ENCODE measurements at regions of chr11 and their contacts with region 1.

Region 1: DNA sequence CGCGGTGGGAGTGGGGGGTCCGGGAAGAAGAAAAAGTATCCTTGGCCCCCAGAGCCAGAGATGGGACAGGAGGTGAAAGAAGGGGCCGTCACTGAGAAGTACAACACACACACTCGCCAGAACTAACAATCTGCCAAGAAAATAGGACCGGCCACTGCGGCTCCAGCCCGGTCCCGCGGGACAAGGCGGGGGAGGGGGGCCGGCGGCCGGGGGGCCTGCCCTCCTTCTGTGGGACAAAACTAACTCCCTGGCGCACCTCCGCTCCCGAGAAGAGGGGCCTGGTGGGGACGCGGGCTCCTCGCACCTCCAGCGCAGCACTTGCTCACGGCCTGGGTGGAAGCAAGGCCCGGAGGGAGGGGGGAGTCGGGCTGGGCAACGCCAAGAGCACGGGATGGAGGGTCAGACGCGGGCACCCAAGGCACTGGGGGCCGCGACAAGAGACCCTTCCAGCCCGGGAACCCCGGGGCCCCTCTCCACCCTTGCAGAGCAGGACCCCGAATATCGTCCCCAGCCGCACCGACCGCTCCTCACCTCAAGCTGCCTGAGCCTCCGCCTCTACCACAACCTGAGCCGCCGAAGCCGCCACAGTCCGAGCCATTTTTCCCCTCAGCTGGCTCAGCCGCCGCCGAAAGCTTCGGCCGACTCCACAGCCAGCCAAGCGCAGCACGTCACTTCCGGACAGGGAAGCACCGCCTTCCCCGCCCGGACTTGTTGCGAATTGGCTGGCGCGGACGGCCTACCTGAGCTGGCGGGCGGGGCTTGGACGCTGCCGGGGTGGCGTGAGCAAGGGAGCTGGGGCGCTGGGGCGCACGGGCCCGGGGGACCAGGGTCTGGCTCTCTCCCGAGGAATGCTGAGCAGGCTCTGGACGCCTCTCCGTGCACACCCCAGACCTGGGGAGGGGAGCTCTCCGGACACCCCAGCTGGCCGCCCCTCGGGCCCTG is at the start of gene PIK3C2A:
- DNase-seq: peak; percentile 86 to 93 (median 93)
- H3K4me3 ChIP-seq: peak within 1 kb of the TSS; percentile 84 to 90 (median 90)
- H3K4me3 Mint-ChIP-seq: peak within 1 kb of the TSS; percentile 96 to 98
- H3K27ac ChIP-seq: peak within 1 kb of the TSS; percentile 85 to 86
- H3K27ac Mint-ChIP-seq: peak within 1 kb of the TSS; percentile 97 to 99 (median 98)
- H3K4me1 ChIP-seq: peaks cover 47 to 52% of the 10 kb centered on the region in 2 donors
- H3K4me1 Mint-ChIP-seq: peaks cover 49% of the 10 kb centered on the region
- H3K27me3 ChIP-seq: no peaks in the 10 kb centered on the region
- H3K27me3 Mint-ChIP-seq: peaks cover 0 to 3% (median 0%) of the 10 kb centered on the region in 3 donors
- CTCF ChIP-seq: no peak
- polyA plus RNA-seq, gene PIK3C2A: 5.3 to 9.3 (median 6.0) TPM

Region 2: DNA sequence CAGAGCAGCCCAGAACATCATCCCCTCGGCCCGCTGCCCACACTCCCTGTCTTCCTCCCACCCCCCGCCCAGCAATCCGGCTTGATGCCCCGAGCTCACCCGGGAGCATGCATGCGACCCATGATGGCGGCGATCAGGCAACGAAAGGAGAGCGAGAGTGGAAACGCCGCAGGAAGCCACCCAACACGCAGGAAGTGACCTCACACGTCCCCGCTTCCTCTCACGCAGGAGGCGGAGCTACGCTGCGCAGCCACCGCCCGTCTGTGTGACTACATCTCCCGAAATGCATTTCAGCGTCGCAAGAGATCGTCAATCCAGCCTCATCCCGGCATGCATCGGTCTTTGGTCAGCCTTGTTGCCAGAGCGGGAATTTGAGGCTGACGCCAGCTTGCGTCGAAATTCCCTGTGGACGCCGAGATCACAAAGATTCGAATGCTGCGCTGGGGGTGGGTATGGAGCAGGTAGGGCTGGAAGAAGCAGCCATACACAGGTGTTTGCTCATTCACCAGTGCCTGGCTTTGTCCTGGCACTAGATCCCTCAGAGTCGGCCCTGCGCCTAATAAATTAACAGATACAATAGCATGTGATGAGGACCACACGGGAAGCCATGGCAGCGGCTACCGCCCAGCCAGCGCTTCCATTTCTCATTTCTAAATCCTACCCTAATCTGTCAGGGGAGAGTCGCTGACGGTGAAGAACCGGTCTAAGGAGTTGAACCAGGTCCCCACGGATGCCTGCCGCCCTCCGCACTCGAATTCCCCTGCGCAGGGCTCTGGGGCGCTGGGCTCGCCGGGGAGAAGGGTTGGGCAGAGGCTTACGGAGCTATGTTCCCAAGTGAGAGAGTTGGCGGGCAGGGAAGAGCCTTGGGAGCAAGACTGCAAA is 129.8 kb before region 1 on chr11 and contains the start of gene RPS13:
- intact Hi-C with region 1: loop called (anchors 2 to 5 kb)
- DNase-seq: peak; percentile 98
- H3K4me3 ChIP-seq: peak within 1 kb of the TSS; percentile 76 to 90 (median 77)
- H3K4me3 Mint-ChIP-seq: peak within 1 kb of the TSS; percentile 97 to 99
- H3K27ac ChIP-seq: peak within 1 kb of the TSS; percentile 96 to 98
- H3K27ac Mint-ChIP-seq: peak within 1 kb of the TSS; percentile 98 to 100 (median 99)
- H3K4me1 ChIP-seq: peaks cover 27 to 39% of the 10 kb centered on the region in 2 donors
- H3K4me1 Mint-ChIP-seq: peaks cover 39% of the 10 kb centered on the region
- H3K27me3 ChIP-seq: no peaks in the 10 kb centered on the region
- H3K27me3 Mint-ChIP-seq: no peaks in the 10 kb centered on the region
- CTCF ChIP-seq: no peak
- polyA plus RNA-seq, gene RPS13: 1,050 to 1,357 (median 1,271) TPM

Region 3: GRCh38 chr11:17098038-17098437 is 109.5 kb before region 1 on chr11:
- intact Hi-C with region 1: loop called in 1 of 2 experiments (anchors 5 kb)
- DNase-seq: peak; percentile 29 to 60 (median 41)
- H3K4me3 ChIP-seq: peak overlapping the region in 1 of 3 experiments; percentile 32
- H3K4me3 Mint-ChIP-seq: peak overlapping the region in 1 of 2 donors; percentile 70
- H3K27ac ChIP-seq: peak overlapping the region; percentile 73 to 87
- H3K27ac Mint-ChIP-seq: peak overlapping the region; percentile 86 to 94 (median 93)
- H3K4me1 ChIP-seq: peaks cover 30 to 35% of the 10 kb centered on the region in 2 donors
- H3K4me1 Mint-ChIP-seq: peaks cover 30% of the 10 kb centered on the region
- H3K27me3 ChIP-seq: no peaks in the 10 kb centered on the region
- H3K27me3 Mint-ChIP-seq: peaks cover 0 to 3% (median 0%) of the 10 kb centered on the region in 3 donors
- CTCF ChIP-seq: no peak

Region 4: DNA sequence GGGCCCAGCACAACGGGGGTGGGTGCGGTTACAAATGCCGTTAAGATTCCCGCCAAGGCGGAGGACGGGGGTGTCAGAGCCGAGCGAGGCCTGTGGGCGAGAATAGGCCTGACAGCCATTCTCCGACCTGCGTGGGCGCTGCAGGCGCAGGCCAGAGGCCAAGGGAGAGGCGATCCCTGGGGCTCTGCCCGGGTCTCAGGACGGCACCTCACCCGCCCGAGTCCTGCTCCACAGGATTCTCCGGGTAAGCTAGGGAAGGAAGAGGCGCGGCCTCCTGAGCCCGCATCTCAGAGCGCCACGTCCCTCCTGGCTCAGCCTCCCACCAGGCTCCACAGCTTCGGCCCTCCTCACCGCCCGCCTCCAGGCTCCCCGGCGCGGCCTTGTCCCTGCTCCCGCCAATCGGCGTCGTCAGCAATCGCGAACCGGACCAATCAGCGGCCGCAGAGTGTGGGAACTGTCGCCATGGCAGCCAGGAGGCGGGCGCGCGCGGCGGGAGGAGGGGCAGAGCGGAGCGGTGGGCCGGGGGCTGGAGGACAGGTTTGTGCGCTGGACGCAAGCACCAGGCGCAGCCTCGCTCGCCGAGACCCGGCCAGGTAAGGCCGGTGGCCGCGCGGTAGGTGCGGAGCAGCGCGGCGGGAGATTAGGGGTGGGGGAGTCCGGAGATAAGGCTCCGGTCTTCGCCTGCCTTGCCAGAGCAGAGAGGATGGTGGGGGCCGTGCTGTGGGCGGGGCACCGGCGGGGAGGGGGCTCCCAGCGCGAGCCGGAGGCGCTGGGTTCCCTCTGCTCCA is 68.8 kb after region 1 on chr11 and contains the start of gene NUCB2:
- intact Hi-C with region 1: loop called (anchors 5 kb)
- DNase-seq: peak; percentile 87 to 91 (median 89)
- H3K4me3 ChIP-seq: peak within 1 kb of the TSS; percentile 57 to 85 (median 64)
- H3K4me3 Mint-ChIP-seq: peak within 1 kb of the TSS; percentile 90 to 95
- H3K27ac ChIP-seq: peak within 1 kb of the TSS; percentile 74 to 86
- H3K27ac Mint-ChIP-seq: peak within 1 kb of the TSS; percentile 83 to 96 (median 90)
- H3K4me1 ChIP-seq: peaks cover 26 to 56% of the 10 kb centered on the region in 2 donors
- H3K4me1 Mint-ChIP-seq: peaks cover 55% of the 10 kb centered on the region
- H3K27me3 ChIP-seq: no peaks in the 10 kb centered on the region
- H3K27me3 Mint-ChIP-seq: peaks cover 0 to 1% (median 1%) of the 10 kb centered on the region in 3 donors
- CTCF ChIP-seq: no peak
- polyA plus RNA-seq, gene NUCB2: 8.6 to 41.3 (median 31.4) TPM

Region 5: DNA sequence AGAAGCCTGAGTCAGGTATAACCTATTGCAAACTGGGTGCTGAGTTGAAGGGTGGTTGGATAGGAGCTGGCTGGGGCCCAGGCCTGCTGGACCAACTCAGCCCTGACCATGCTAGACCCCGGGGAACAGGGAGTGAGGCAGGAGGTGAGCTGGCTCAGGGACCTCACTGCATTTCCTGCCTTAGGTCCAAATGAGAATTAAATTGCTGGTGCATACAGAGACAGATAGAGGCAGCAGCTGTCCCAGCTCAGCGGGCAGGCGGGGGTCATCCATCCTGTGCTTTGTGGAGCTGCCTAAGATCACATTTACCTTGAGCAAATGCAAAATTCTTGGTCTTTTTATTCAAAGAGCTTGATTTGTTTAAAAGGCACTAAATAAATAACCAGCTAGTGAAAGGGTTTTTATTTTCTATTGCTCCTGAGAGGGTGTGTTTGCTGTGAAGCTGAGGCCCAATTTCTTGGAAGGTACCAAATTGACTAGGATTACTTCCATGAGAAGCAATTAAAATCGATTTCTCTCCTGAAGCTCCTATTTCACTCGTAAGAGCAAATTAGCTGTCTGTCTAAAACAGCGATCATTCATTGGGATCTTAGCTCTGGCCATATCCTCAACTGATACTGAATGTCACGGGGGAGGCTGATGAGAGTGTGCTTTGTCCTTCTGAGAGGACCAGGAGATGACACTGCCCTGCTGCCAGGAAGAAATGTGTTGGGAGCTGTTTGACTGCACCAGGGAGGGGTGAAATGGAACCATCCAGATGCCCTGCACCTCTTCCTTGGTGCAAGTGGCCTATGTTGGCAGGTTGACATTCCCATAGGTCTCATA is 311.7 kb after region 1 on chr11:
- intact Hi-C with region 1: no loop called
- DNase-seq: no peak
- H3K4me3 ChIP-seq: no peak overlapping the region
- H3K4me3 Mint-ChIP-seq: no peak overlapping the region
- H3K27ac ChIP-seq: no peak overlapping the region
- H3K27ac Mint-ChIP-seq: peak overlapping the region in 1 of 7 donors; percentile 38
- H3K4me1 ChIP-seq: no peaks in the 10 kb centered on the region
- H3K4me1 Mint-ChIP-seq: no peaks in the 10 kb centered on the region
- H3K27me3 ChIP-seq: no peaks in the 10 kb centered on the region
- H3K27me3 Mint-ChIP-seq: peaks cover 3 to 5% (median 3%) of the 10 kb centered on the region in 3 donors
- CTCF ChIP-seq: no peak